CD4-positive, alpha-beta T cell (primary cell): ENCODE measurements at regions of chr11 and their contacts with region 1.

Region 1: DNA sequence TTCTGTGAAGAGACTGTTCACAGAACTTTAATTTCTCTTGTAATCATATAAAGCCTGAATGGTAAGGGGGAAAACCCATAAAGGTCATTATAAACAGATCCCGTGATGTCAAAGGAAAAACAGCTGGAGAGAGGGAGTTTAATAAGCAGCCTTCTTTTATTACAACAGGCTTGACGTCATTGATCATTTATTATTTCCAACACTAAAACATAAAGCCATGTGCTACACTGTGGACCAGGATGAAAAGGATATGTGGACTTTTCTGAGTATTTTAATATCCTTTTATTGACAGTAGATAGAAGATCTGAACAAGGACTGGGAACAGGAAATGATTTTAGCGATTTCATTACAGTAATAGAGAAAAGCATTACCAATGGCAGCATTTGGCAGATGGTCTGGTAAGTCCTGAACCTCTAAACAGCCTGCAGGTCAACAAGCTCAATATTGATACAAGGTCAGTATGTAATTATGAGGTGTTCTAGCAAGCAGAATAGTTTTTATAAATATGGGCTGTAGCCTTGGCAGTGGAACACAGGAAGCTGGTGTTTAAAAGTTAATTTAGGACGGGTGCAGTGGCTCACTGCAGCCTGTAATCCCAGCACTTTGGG is 25.1 kb upstream of the TPH1 start:
- DNase-seq: no peak
- ATAC-seq: no peak
- H3K4me3 ChIP-seq: no peak overlapping the region
- H3K4me3 Mint-ChIP-seq: no peak overlapping the region
- H3K27ac ChIP-seq: no peak overlapping the region
- H3K27ac Mint-ChIP-seq: no peak overlapping the region
- H3K4me1 ChIP-seq: no peaks in the 10 kb centered on the region
- H3K4me1 Mint-ChIP-seq: no peaks in the 10 kb centered on the region
- H3K27me3 ChIP-seq: no peaks in the 10 kb centered on the region
- H3K27me3 Mint-ChIP-seq: no peaks in the 10 kb centered on the region
- CTCF ChIP-seq: no peak

Region 2: DNA sequence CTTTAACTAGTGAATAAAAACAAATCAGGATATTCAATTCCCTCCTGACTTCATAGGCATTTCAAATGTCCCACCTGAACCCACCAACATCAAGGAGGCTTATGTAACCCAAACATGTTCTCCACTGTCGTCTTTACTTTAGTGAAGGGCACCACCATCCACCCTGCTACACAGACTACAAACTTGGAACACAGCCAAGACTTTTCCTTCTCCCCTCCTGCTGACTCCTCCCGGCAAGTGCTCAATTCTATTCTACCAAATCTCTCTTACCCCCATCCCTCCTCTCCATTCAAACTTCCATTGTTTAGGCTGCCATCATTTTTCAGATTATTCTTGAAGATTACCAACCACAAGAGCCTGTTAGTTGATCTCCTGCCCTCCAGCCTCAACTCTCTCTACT is 10.3 kb after region 1 on chr11:
- CTCF ChIA-PET with region 1: no interaction called
- POLR2A ChIA-PET with region 1: no interaction called
- intact Hi-C with region 1: no loop called
- DNase-seq: no peak
- ATAC-seq: no peak
- H3K4me3 ChIP-seq: no peak overlapping the region
- H3K4me3 Mint-ChIP-seq: no peak overlapping the region
- H3K27ac ChIP-seq: no peak overlapping the region
- H3K27ac Mint-ChIP-seq: no peak overlapping the region
- H3K4me1 ChIP-seq: no peaks in the 10 kb centered on the region
- H3K4me1 Mint-ChIP-seq: no peaks in the 10 kb centered on the region
- H3K27me3 ChIP-seq: no peaks in the 10 kb centered on the region
- H3K27me3 Mint-ChIP-seq: no peaks in the 10 kb centered on the region
- CTCF ChIP-seq: no peak

Region 3: DNA sequence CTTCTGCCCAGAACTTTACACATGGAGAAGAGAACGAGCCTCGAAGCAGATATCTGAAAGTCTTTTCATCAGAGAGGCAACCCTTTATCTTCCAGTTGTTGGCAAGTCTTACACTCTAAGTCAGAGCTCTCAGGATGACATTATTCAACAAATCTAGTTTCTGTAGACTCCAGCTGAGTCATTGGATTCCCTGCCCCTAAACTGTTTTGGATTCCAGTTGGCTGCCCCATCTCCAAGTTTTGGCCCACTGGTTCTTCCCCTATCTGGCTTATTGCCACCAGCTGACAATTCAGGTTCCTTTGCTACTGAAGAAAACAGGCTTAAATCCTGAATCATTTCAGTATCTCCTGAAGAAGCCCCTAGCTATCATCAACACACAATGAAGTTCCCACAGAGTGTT is 20.5 kb after region 1 on chr11:
- CTCF ChIA-PET with region 1: interaction called, 3 read pairs
- POLR2A ChIA-PET with region 1: no interaction called
- intact Hi-C with region 1: loop called in 1 of 2 experiments (anchors 2 kb)
- DNase-seq: no peak
- ATAC-seq: no peak
- H3K4me3 ChIP-seq: no peak overlapping the region
- H3K4me3 Mint-ChIP-seq: no peak overlapping the region
- H3K27ac ChIP-seq: no peak overlapping the region
- H3K27ac Mint-ChIP-seq: no peak overlapping the region
- H3K4me1 ChIP-seq: no peaks in the 10 kb centered on the region
- H3K4me1 Mint-ChIP-seq: no peaks in the 10 kb centered on the region
- H3K27me3 ChIP-seq: no peaks in the 10 kb centered on the region
- H3K27me3 Mint-ChIP-seq: no peaks in the 10 kb centered on the region
- CTCF ChIP-seq: no peak